Mammary epithelial cell (primary cell): ENCODE measurements at regions of chr7 and their contacts with region 1.

Region 1: DNA sequence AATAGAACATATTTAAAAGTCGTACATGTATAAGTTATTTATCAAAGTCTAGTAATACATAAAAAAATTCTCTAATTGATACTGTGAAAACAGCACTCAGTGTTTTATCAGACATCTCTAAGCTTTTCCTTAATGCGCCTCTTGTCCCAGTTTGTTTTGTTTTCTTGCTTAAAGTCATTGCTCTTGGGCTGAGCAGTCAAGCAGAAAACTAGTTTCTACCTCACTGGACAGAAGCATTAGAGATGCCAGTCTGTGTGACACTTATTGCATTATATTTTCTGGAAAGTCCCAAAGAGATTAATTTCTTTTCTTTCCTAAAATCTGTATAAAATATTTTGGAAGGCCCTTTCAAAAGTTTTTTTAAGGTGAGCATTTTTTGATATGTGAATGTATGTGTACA is 236.2 kb downstream of the PCLO start:
- DNase-seq: no peak
- H3K4me3 ChIP-seq: no peak overlapping the region
- H3K27ac ChIP-seq: no peak overlapping the region
- H3K4me1 ChIP-seq: no peaks in the 10 kb centered on the region
- H3K27me3 ChIP-seq: no peaks in the 10 kb centered on the region
- CTCF ChIP-seq: no peak

Region 2: DNA sequence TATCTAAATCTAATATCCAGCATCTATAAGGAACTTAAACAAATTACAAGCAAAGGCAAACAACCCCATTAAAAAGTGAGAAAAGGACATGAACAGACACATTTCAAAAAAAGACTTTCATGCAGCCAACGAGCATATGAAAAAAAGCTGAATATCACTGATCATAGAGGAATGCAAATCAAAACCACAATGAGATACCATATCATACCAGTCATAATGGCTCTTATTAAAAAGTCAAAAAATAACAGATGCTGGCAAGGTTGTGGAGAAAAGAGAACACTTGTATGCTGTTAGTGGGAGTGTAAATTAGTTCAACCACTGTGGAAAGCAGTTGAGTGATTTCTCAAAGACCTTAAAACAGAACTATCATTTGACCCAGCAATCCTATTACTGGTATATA is 148.5 kb before region 1 on chr7:
- CTCF ChIA-PET with region 1: no interaction called
- dilution Hi-C with region 1: no loop called
- in situ Hi-C with region 1: no loop called
- intact Hi-C with region 1: no loop called
- DNase-seq: peak; percentile 49
- H3K4me3 ChIP-seq: no peak overlapping the region
- H3K27ac ChIP-seq: no peak overlapping the region
- H3K4me1 ChIP-seq: peaks cover 4% of the 10 kb centered on the region
- H3K27me3 ChIP-seq: no peaks in the 10 kb centered on the region
- CTCF ChIP-seq: no peak

Region 3: GRCh38 chr7:82965088-82966036 is 38.9 kb after region 1 on chr7:
- CTCF ChIA-PET with region 1: no interaction called
- dilution Hi-C with region 1: loop called (anchors 5 kb)
- in situ Hi-C with region 1: no loop called
- intact Hi-C with region 1: no loop called
- DNase-seq: no peak
- H3K4me3 ChIP-seq: no peak overlapping the region
- H3K27ac ChIP-seq: no peak overlapping the region
- H3K4me1 ChIP-seq: no peaks in the 10 kb centered on the region
- H3K27me3 ChIP-seq: no peaks in the 10 kb centered on the region
- CTCF ChIP-seq: no peak